Cardiac septum (tissue), 1 donor: ENCODE measurements at regions of chr22 and their contacts with region 1.

Region 1: GRCh38 chr22:30485362-30485988 is 13.7 kb upstream of the SEC14L3 start:
- DNase-seq: peak; percentile 83

Region 2: DNA sequence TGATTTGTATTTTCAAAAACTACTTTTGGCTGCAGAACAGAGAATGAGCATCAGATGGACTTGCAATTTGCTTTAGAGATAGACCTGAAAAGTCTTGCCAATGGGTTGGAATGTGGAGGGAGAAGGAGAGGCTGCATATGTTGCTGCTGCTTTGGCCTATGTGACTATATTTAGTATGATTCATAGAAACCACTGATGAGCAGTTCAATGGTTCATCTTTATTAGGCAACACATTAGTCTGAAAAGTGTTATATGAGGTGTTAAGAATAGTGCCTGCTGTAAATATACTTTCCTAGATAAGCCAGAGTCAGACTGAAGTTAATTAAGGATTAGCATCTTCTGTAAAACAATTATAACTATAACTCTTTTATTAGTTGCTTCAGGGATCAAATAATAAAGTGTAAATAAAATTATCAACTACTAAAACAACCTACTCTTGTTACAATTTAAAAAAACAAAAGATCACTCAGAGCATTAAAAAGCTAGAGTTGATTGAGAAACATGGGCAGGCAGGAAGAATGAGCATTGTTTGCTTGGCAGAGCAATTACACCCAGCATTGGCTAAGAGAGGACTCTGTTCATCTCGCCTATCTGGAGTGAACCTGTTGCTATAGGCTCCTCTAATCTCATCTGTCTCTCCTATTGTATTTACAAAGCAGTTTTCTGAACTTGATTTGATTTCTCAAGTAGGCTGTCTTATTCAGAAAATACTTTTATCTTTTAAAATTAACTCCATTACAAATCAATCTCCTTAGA is 368.9 kb before region 1 on chr22:
- intact Hi-C with region 1: loop called (anchors 10 kb)
- DNase-seq: no peak

Region 3: DNA sequence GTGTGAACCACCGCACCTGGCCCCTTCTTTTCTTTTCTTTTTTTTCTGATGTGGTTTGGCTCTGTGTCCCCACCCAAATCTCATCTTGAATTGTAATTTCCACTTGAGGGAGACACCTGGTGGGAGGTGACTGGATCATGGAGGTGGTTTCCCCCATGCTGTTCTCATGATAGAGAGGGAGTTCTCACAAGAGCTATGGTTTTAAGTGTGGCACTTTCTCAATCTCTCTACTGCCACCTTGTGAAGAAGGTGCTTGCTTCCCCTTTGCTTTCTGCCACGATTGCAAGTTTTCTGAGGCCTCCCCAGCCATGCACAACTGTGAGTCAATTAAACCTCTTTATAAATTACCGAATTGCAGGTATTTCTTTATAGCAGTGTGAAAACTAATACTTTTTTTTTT is 116.6 kb after region 1 on chr22:
- intact Hi-C with region 1: no loop called
- DNase-seq: no peak